HepG2 (cell line): ENCODE measurements at regions of chr2 and their contacts with region 1.

Region 1: GRCh38 chr2:43258547-43259156 is 32.2 kb upstream of the ZFP36L2 start:
- DNase-seq: peak; percentile 85
- ATAC-seq: peak; percentile 84
- H3K4me3 ChIP-seq: no peak overlapping the region
- H3K27ac ChIP-seq: peak overlapping the region; percentile 22
- H3K4me1 ChIP-seq: peaks cover 69% of the 10 kb centered on the region
- H3K27me3 ChIP-seq: no peaks in the 10 kb centered on the region
- CTCF ChIP-seq: no peak
- EP300 ChIP-seq: peak; percentile 72 to 94; a peak in 3 of 4 replicates
- POLR2A ChIP-seq: no peak
- RAD21 ChIP-seq: no peak

Region 2: DNA sequence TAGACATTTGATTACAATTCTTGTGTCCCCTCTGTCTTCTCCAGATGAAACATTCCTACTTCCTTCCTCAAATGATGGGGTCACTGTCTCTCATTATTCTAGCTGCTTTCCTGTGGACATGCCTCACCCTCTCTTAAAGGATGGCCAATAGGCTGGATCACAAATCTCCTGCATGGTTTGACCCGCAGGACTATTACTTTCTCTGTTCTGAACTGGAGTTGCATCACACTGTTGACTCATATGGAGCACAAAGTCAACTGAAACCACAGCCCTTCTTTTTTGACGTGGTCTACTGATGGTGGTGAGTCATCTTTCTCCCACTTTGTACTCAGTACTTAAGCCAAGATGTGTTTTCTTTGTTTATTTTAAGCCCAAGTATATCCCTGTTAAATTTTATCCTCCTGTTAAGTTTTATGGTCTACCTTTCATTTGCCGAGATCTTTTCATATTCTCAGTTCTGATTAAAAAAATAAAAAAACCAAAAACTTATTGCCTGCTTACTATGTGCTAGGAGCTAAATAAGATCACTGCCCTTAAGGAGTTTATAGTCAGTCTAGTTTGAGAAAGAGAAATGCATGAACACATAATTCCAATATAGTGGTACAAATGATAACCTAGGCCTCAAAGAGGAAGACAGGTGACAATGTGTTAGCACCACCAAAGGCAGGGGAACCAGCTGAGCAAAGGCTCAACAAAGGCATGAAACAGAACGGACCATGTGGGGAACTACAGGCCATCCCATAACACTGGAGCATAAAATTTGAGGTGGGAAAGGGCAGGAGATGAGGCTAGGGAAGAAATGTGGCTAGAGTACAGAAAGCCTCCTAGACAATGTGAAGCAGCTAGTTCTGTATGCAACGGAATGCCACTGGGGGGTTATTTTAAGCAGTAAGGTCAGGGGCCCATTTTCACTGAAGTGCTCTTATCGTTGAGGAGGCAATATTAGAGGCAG is 35.4 kb after region 1 on chr2:
- CTCF ChIA-PET with region 1: no interaction called
- POLR2A ChIA-PET with region 1: interaction called, 4 read pairs
- in situ Hi-C with region 1: no loop called
- intact Hi-C with region 1: loop called (anchors 1 kb)
- DNase-seq: peak; percentile 99
- ATAC-seq: peak; percentile 95
- H3K4me3 ChIP-seq: peak overlapping the region in 1 of 3 experiments; percentile 6; a peak in 1 of 6 replicates
- H3K27ac ChIP-seq: peak overlapping the region; percentile 82
- H3K4me1 ChIP-seq: peaks cover 61% of the 10 kb centered on the region
- H3K27me3 ChIP-seq: no peaks in the 10 kb centered on the region
- CTCF ChIP-seq: peak; percentile 23; the same call in 1 of the 2 replicates
- EP300 ChIP-seq: peak; percentile 91 to 98
- POLR2A ChIP-seq: peak in 1 of 2 experiments; percentile 35; a peak in 1 of 4 replicates
- RAD21 ChIP-seq: peak; percentile 48